ENCODE measurements at regions of chr13 and their contacts with region 1.

Region 1: GRCh38 chr13:41465241-41465847 is 8.0 kb downstream of the RGCC start:
- DNase-seq: peak; percentile 63 to 90 (median 89)
- ATAC-seq: peak; percentile 72
- H3K4me3 ChIP-seq: peak overlapping the region; percentile 51
- H3K4me3 Mint-ChIP-seq: peak overlapping the region; percentile 89 to 98 (median 94)
- H3K27ac ChIP-seq: peak overlapping the region; percentile 97
- H3K27ac Mint-ChIP-seq: peak overlapping the region; percentile 96 to 100 (median 99)
- H3K4me1 ChIP-seq: peaks cover 64 to 87% of the 10 kb centered on the region in 2 donors
- H3K4me1 Mint-ChIP-seq: peaks cover 64 to 98% (median 93%) of the 10 kb centered on the region in 7 donors
- H3K27me3 ChIP-seq: no peaks in the 10 kb centered on the region
- H3K27me3 Mint-ChIP-seq: no peaks in the 10 kb centered on the region

Region 2: DNA sequence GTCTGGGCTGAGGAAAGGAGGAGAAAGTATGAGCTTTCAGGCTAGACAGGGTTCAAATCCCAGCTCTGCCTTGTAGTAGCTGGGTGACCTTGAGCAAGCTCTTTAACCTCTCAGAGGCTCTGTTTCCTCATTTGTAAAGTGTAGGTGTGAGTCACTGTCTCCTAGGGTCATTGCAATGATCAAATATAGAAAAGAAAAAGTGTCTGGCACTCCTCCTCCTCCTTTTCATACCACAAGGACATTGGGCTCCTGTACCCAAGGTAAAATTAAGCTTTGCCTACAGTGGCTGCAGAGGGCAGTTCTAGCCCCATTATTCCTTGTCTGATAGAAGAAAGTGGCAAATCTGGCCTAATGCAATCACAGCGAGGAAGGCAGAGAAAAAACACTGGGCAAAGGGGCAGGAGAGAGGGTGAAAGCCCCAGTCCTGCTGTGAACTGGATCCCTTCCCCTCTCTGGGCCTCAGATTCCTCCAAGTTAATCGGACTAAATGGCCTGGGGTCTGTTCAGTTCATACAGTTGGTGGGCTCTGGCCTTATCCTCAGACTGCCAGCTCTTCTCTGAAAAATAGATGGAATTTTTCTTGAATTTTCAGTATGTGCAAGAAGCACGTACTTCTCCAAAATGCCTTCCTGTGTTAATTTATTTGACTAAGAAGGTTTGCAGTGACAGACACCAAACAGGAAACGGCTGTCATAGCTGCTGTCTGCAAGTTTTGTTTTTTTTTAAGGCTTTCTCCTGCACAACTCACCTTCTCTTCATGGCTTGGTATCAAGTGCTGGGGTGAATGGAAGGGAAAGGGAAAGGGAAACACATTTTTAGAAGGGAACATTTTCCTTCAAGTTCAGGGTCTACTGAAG is 27.3 kb after region 1 on chr13:
- CTCF ChIA-PET with region 1: interaction called, 21 read pairs
- POLR2A ChIA-PET with region 1: interaction called, 284 read pairs
- intact Hi-C with region 1: loop called (anchors 1 kb)
- DNase-seq: peak in 7 of 9 donors; percentile 59 to 76 (median 71)
- ATAC-seq: peak; percentile 84
- H3K4me3 ChIP-seq: peak overlapping the region; percentile 19
- H3K4me3 Mint-ChIP-seq: peak overlapping the region; percentile 66 to 91 (median 80)
- H3K27ac ChIP-seq: peak overlapping the region; percentile 76
- H3K27ac Mint-ChIP-seq: peak overlapping the region; percentile 96 to 100 (median 99)
- H3K4me1 ChIP-seq: peaks cover 24 to 78% of the 10 kb centered on the region in 2 donors
- H3K4me1 Mint-ChIP-seq: peaks cover 56 to 97% (median 90%) of the 10 kb centered on the region in 7 donors
- H3K27me3 ChIP-seq: no peaks in the 10 kb centered on the region
- H3K27me3 Mint-ChIP-seq: no peaks in the 10 kb centered on the region

Region 3: DNA sequence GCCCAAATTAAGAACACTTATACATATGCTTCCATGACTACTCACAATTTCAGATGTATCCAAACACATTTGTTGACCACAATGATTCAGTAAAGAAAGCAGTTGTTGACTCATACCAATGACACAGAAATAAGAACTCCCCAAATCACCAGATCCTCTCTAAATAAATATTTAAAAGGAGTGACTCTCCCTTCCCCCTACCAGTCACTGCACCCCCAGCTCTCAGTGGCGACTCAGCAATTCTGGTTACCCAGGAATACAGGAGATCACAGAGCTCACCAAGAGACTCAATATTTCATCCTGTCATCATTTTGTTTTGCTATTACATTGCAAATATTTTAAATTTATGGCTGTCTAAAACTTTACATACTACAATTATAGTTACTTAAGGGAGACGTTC is 123.6 kb after region 1 on chr13:
- CTCF ChIA-PET with region 1: interaction called, 31 read pairs
- POLR2A ChIA-PET with region 1: interaction called, 12 read pairs
- intact Hi-C with region 1: loop called in 1 of 2 experiments (anchors 1 kb)
- DNase-seq: peak in 1 of 9 donors; percentile 32
- ATAC-seq: peak; percentile 82
- H3K4me3 ChIP-seq: no peak overlapping the region
- H3K4me3 Mint-ChIP-seq: no peak overlapping the region
- H3K27ac ChIP-seq: no peak overlapping the region
- H3K27ac Mint-ChIP-seq: no peak overlapping the region
- H3K4me1 ChIP-seq: peaks cover 0 to 6% of the 10 kb centered on the region in 2 donors
- H3K4me1 Mint-ChIP-seq: peaks cover 0 to 10% (median 4%) of the 10 kb centered on the region in 7 donors
- H3K27me3 ChIP-seq: no peaks in the 10 kb centered on the region
- H3K27me3 Mint-ChIP-seq: no peaks in the 10 kb centered on the region

Region 4: GRCh38 chr13:41960639-41961465 is 495.5 kb after region 1 on chr13 and contains the start of gene VWA8:
- CTCF ChIA-PET with region 1: no interaction called
- POLR2A ChIA-PET with region 1: no interaction called
- intact Hi-C with region 1: loop called in 1 of 2 experiments (anchors 2 kb)
- DNase-seq: peak; percentile 75 to 86 (median 84)
- ATAC-seq: peak; percentile 97
- H3K4me3 ChIP-seq: peak within 1 kb of the TSS; percentile 86
- H3K4me3 Mint-ChIP-seq: peak within 1 kb of the TSS; percentile 92 to 97 (median 94)
- H3K27ac ChIP-seq: peak within 1 kb of the TSS; percentile 84
- H3K27ac Mint-ChIP-seq: peak within 1 kb of the TSS; percentile 88 to 99 (median 95)
- H3K4me1 ChIP-seq: peaks cover 14 to 16% of the 10 kb centered on the region in 2 donors
- H3K4me1 Mint-ChIP-seq: peaks cover 19 to 63% (median 43%) of the 10 kb centered on the region in 7 donors
- H3K27me3 ChIP-seq: no peaks in the 10 kb centered on the region
- H3K27me3 Mint-ChIP-seq: peaks cover 0 to 2% (median 0%) of the 10 kb centered on the region in 5 donors
- total RNA-seq, gene VWA8: 16.8 to 26.3 (median 21.8) TPM